ENCODE measurements at regions of chr12 and their contacts with region 1.

Region 1: GRCh38 chr12:130871286-130872178 is at the start of gene RAN:
- DNase-seq: peak; percentile 93
- H3K4me3 Mint-ChIP-seq: peak within 1 kb of the TSS; percentile 90
- H3K27ac Mint-ChIP-seq: peak within 1 kb of the TSS; percentile 94
- H3K4me1 Mint-ChIP-seq: peaks cover 56% of the 10 kb centered on the region
- H3K27me3 Mint-ChIP-seq: no peaks in the 10 kb centered on the region
- total RNA-seq, gene RAN: 932 to 936 TPM

Region 2: DNA sequence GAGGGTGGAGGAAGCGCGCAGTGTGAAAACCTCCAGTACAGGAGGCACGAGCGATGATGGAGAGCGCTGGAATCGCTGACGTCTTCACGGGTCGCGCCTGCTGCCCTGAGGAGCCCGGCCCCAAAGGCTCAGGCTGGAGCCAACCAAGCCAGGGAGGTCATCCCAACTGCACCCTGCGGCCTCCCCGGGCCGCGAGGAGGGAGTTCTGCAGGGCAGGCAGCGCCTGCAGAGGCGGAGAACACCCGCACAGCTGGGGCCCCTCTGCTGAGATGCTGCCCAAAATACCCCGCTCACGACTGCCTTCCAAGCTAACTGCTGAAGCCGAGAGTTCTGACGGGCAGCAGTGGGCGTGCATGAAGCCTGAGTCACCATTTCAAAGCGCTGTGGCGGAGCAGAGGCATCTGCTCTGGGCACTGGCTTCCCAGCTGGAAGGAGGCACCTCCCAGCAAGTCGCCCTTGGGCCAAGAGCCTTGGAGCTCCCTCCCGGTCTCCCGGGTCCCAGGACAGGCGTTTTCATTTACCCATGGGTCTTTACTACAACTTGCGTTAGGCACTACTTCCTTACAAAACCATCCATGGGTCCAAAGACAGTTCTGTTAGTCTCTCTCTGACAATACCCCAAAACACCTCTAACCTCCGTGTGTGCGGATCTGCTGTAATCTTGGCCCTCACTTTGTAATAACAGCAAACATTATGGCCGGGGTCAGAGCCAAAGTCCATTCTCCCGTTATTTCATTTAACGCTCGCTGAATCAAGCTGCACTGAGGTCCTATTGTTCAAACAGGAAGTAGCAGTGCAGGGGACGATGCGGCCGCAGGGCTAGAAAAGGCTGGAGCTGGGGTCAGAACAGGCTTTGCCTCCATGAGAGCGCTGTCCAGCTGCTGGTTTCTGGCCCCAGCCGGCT is 95.3 kb before region 1 on chr12:
- CTCF ChIA-PET with region 1: no interaction called
- POLR2A ChIA-PET with region 1: no interaction called
- DNase-seq: peak; percentile 32
- H3K4me3 Mint-ChIP-seq: peak overlapping the region; percentile 31
- H3K27ac Mint-ChIP-seq: no peak overlapping the region
- H3K4me1 Mint-ChIP-seq: peaks cover 13% of the 10 kb centered on the region
- H3K27me3 Mint-ChIP-seq: peaks cover 26% of the 10 kb centered on the region

Region 3: DNA sequence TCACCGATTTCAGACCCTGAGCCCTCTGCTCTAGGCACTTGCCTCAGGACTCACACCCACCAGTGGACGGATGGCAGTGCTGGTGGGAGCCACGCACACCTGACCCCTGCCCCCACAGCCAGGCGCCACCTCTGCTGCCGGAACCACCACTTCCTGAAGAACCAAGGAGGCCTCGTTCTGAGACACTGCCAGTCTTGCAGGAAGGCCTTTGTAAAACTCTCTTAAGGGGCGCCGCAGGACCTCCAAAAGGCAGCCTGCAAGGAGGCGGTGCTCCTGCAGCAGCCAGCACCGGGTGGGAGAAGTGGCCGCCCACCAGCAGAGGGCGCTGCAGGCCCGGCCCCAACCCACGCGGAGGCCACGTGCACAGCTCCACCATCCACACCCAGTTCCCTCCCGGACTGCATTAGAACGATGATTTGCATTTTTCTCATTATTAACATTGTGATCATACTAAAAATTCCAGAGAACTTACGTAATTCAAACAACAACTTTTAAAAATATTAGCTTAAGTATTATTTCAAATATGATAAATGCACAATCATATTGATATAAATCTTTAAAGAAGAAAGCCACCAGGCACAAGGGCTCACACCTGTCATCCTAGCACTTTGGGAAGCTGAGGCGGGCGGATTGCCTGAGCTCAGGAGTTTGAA is 45.3 kb before region 1 on chr12:
- CTCF ChIA-PET with region 1: interaction called, 15 read pairs
- POLR2A ChIA-PET with region 1: interaction called, 4 read pairs
- DNase-seq: peak; percentile 65
- H3K4me3 Mint-ChIP-seq: no peak overlapping the region
- H3K27ac Mint-ChIP-seq: no peak overlapping the region
- H3K4me1 Mint-ChIP-seq: peaks cover 17% of the 10 kb centered on the region
- H3K27me3 Mint-ChIP-seq: no peaks in the 10 kb centered on the region

Region 4: GRCh38 chr12:131074221-131075083 is 202.9 kb after region 1 on chr12:
- CTCF ChIA-PET with region 1: no interaction called
- POLR2A ChIA-PET with region 1: no interaction called
- DNase-seq: no peak
- H3K4me3 Mint-ChIP-seq: no peak overlapping the region
- H3K27ac Mint-ChIP-seq: no peak overlapping the region
- H3K4me1 Mint-ChIP-seq: no peaks in the 10 kb centered on the region
- H3K27me3 Mint-ChIP-seq: no peaks in the 10 kb centered on the region